ENCODE measurements at regions of chr5 and their contacts with region 1.

Region 1: GRCh38 chr5:159928122-159928909 is 12.0 kb downstream of the ADRA1B start:
- DNase-seq: peak; percentile 90
- ATAC-seq: peak; percentile 100
- H3K4me3 ChIP-seq: no peak overlapping the region; the same call in 1 of the 2 replicates
- H3K27ac ChIP-seq: peak overlapping the region; percentile 21; the same call in 1 of the 2 replicates
- H3K4me1 ChIP-seq: peaks cover 17% of the 10 kb centered on the region
- H3K27me3 ChIP-seq: no peaks in the 10 kb centered on the region
- CTCF ChIP-seq: no peak

Region 2: DNA sequence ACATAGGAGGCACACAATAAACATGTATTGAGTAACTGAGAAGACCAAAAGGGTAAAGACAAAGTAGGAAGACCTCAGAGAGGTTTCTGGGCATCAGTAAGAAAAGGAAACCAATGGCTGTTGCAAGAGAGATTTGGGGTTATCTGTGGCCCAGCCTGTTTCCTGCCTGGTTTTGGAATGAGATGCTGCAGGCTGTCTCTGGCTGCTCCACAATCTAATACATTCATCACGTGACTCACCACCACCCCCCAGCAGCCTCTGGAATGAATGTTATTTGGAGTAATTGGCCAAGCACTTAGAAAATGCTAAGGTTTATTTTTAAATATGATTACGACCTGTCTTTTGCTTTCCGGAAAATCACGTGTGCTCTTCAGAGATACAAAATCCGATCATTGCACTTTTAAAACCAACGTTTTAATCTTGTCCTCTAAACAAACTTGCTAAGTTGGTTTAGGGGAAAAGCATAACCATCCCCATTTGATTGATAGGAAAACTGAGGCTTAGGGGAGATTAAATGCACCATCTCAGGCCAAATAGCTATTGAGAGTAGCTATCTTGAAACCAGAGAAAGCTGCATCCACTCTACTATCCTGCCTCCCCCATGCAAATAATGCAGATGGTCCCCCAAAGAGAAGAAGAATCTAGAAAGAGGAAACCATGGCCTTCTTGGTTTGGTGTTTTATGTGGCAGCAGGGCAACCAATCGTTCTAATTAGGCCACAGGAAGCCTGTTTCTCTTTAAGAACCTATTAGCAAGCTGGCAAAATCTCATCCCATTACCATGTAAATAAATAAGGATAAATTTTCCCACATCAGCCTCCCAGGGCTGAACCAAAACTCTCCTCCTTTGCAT is 163.8 kb before region 1 on chr5:
- CTCF ChIA-PET with region 1: no interaction called
- POLR2A ChIA-PET with region 1: no interaction called
- intact Hi-C with region 1: no loop called
- DNase-seq: peak; percentile 28
- ATAC-seq: no peak
- H3K4me3 ChIP-seq: no peak overlapping the region
- H3K27ac ChIP-seq: no peak overlapping the region
- H3K4me1 ChIP-seq: no peaks in the 10 kb centered on the region; the same call in 1 of the 2 replicates
- H3K27me3 ChIP-seq: no peaks in the 10 kb centered on the region
- CTCF ChIP-seq: no peak

Region 3: GRCh38 chr5:159965031-159965837 is 36.9 kb after region 1 on chr5:
- CTCF ChIA-PET with region 1: no interaction called
- POLR2A ChIA-PET with region 1: no interaction called
- intact Hi-C with region 1: loop called (anchors 5 kb)
- DNase-seq: peak; percentile 69
- ATAC-seq: peak; percentile 90
- H3K4me3 ChIP-seq: no peak overlapping the region
- H3K27ac ChIP-seq: no peak overlapping the region
- H3K4me1 ChIP-seq: peaks cover 7% of the 10 kb centered on the region; the same call in 1 of the 2 replicates
- H3K27me3 ChIP-seq: no peaks in the 10 kb centered on the region
- CTCF ChIP-seq: peak; percentile 82

Region 4: GRCh38 chr5:160298189-160298588 is 369.9 kb after region 1 on chr5:
- CTCF ChIA-PET with region 1: no interaction called
- POLR2A ChIA-PET with region 1: no interaction called
- intact Hi-C with region 1: no loop called
- DNase-seq: no peak
- ATAC-seq: no peak
- H3K4me3 ChIP-seq: no peak overlapping the region
- H3K27ac ChIP-seq: no peak overlapping the region
- H3K4me1 ChIP-seq: no peaks in the 10 kb centered on the region
- H3K27me3 ChIP-seq: no peaks in the 10 kb centered on the region
- CTCF ChIP-seq: no peak

Measured in PC-3 (cell line).